WTC11 (cell line): ENCODE measurements at regions of chr3 and their contacts with region 1.

Region 1: DNA sequence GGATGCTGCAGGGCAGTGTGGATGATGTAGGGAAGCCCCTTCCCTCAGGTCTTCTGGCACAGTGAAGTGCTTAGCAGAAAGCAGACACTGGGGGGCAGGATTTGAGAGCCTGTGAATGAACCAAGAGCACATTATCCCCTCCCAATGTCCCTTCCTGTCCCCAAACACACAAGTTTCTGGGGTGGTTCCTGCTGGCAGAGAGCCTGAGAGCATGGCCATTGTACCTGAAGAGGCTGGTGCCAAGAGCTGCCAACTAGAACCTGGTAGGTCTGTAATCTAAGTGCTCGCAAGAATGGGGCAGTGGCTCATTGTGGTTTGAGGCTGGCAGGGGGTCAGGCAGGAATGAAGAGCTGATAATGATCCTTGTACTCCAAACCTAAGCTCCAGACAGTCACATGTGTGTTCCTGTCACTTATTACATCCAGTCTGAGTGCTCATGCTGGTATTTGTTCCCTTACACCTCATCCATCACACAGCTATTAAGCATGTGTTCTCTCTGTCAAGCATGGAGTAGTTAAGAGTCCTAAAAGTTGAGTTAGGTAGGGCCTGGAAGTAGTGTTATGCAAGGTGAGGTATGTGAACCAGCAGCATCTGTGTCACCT is 6.7 kb upstream of the CCR1 start:
- DNase-seq: peak; percentile 63
- ATAC-seq: peak; percentile 97
- H3K4me3 Mint-ChIP-seq: no peak overlapping the region
- H3K27ac Mint-ChIP-seq: no peak overlapping the region
- H3K4me1 Mint-ChIP-seq: 0 out of 2 replicates have a peak, but pooled peaks cover 4% of the 10 kb centered on the region
- H3K27me3 Mint-ChIP-seq: peaks cover 2% of the 10 kb centered on the region; the same call in 1 of the 2 replicates
- CTCF ChIP-seq: no peak

Region 2: DNA sequence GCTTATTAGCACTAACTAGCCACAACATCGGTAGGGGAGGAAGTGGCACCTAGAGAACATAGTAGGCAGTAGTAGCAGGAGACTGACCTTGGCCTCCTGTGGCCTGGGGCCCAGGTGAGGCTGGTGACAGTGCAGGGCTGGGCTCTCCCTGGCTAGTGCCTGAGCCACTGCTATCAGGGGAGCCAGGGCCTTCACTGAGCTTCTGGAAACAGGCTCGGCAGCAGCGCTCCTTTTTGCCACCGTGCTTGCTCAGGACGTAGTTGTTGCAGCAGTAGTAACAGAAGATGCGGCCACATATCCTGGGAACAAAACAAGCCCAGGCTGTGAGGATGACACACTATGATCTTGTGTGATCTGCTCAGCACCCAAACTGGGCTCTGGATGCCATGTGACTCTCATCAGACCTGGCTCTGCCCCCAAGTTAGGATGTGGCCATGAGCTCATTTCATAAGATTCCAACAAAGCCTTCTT is 256.5 kb before region 1 on chr3:
- CTCF ChIA-PET with region 1: no interaction called
- POLR2A ChIA-PET with region 1: no interaction called
- DNase-seq: no peak
- ATAC-seq: no peak
- H3K4me3 Mint-ChIP-seq: no peak overlapping the region
- H3K27ac Mint-ChIP-seq: no peak overlapping the region
- H3K4me1 Mint-ChIP-seq: no peaks in the 10 kb centered on the region
- H3K27me3 Mint-ChIP-seq: no peaks in the 10 kb centered on the region
- CTCF ChIP-seq: no peak

Region 3: DNA sequence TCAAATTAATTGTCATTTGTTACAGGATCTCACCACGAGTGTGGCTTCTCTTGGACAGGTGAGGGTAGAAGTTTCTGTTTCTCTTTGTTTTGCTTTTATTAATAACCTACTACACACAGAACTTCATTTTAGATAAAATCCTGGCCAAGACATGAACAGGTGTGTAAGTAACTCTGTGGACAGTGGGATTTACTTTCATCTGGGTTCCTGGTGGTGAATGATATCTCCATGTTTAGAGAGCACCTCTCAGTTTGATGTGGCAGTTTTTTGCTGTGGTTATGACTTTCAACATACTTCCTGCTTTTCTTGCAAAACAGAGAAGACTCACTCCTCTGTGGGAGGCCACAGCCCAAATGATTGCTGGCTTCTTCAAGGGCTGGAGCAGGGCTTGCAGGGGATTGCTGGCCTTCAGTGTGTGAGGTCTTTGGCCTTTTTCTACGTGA is 116.5 kb before region 1 on chr3:
- CTCF ChIA-PET with region 1: no interaction called
- POLR2A ChIA-PET with region 1: no interaction called
- DNase-seq: no peak
- ATAC-seq: no peak
- H3K4me3 Mint-ChIP-seq: no peak overlapping the region
- H3K27ac Mint-ChIP-seq: no peak overlapping the region
- H3K4me1 Mint-ChIP-seq: no peaks in the 10 kb centered on the region
- H3K27me3 Mint-ChIP-seq: no peaks in the 10 kb centered on the region
- CTCF ChIP-seq: no peak

Region 4: GRCh38 chr3:46282696-46283095 is 67.8 kb after region 1 on chr3:
- CTCF ChIA-PET with region 1: no interaction called
- POLR2A ChIA-PET with region 1: no interaction called
- DNase-seq: no peak
- ATAC-seq: no peak
- H3K4me3 Mint-ChIP-seq: no peak overlapping the region
- H3K27ac Mint-ChIP-seq: no peak overlapping the region
- H3K4me1 Mint-ChIP-seq: no peaks in the 10 kb centered on the region
- H3K27me3 Mint-ChIP-seq: no peaks in the 10 kb centered on the region; the same call in 1 of the 2 replicates
- CTCF ChIP-seq: no peak

Region 5: GRCh38 chr3:46368569-46368968 is 153.7 kb after region 1 on chr3:
- CTCF ChIA-PET with region 1: interaction called, 68 read pairs
- POLR2A ChIA-PET with region 1: no interaction called
- DNase-seq: peak; percentile 59
- ATAC-seq: peak; percentile 98
- H3K4me3 Mint-ChIP-seq: no peak overlapping the region
- H3K27ac Mint-ChIP-seq: no peak overlapping the region
- H3K4me1 Mint-ChIP-seq: no peaks in the 10 kb centered on the region
- H3K27me3 Mint-ChIP-seq: peaks cover 2% of the 10 kb centered on the region; the same call in 1 of the 2 replicates
- CTCF ChIP-seq: no peak

Region 6: DNA sequence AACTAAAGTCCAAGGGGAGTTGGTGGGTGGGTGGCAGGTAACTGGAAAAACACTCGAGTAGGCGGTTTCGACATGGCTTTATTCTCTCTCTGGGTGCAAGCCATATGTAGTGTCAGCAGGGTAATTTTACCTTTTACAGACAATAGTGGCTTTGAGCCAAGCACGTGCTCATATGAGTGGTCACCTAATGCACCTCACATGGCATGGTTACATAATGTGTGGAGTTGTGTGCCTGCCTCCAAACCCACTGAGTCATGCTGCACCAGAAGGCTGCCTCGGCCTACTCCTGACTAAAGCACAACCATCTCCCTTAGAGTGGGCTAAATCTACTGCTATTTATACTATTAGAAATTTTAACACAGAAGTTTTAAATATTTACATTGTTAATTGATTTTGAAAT is 208.7 kb after region 1 on chr3:
- CTCF ChIA-PET with region 1: interaction called, 11 read pairs
- POLR2A ChIA-PET with region 1: no interaction called
- DNase-seq: no peak
- ATAC-seq: no peak
- H3K4me3 Mint-ChIP-seq: no peak overlapping the region
- H3K27ac Mint-ChIP-seq: no peak overlapping the region
- H3K4me1 Mint-ChIP-seq: peaks cover 4% of the 10 kb centered on the region
- H3K27me3 Mint-ChIP-seq: no peaks in the 10 kb centered on the region
- CTCF ChIP-seq: no peak

Region 7: GRCh38 chr3:46717447-46718231 is 502.8 kb after region 1 on chr3 and contains the start of gene PRSS50:
- CTCF ChIA-PET with region 1: no interaction called
- POLR2A ChIA-PET with region 1: no interaction called
- DNase-seq: peak; percentile 86
- ATAC-seq: peak; percentile 94
- H3K4me3 Mint-ChIP-seq: no peak within 1 kb of the TSS
- H3K27ac Mint-ChIP-seq: no peak within 1 kb of the TSS
- H3K4me1 Mint-ChIP-seq: no peaks in the 10 kb centered on the region
- H3K27me3 Mint-ChIP-seq: no peaks in the 10 kb centered on the region
- CTCF ChIP-seq: peak; percentile 94
- total RNA-seq, gene PRSS50: 0.70 to 1.4 TPM (median 1.2 TPM) in 3 replicates